ENCODE measurements at regions of chr11 and their contacts with region 1.

Region 1: GRCh38 chr11:9219572-9219971 is 45.6 kb downstream of the DENND5A start:
- DNase-seq: no peak
- ATAC-seq: no peak
- H3K4me3 ChIP-seq: no peak overlapping the region
- H3K27ac ChIP-seq: no peak overlapping the region
- H3K4me1 ChIP-seq: peaks cover 15% of the 10 kb centered on the region
- H3K27me3 ChIP-seq: no peaks in the 10 kb centered on the region
- CTCF ChIP-seq: no peak
- EP300 ChIP-seq: no peak
- POLR2A ChIP-seq: no peak
- RAD21 ChIP-seq: no peak

Region 2: GRCh38 chr11:9039194-9039593 is 180.4 kb before region 1 on chr11:
- CTCF ChIA-PET with region 1: no interaction called
- POLR2A ChIA-PET with region 1: no interaction called
- RAD21 ChIA-PET with region 1: no interaction called
- SMC1A ChIA-PET with region 1: no interaction called
- in situ Hi-C with region 1: no loop called
- intact Hi-C with region 1: no loop called
- DNase-seq: peak; percentile 19
- ATAC-seq: peak; percentile 92
- H3K4me3 ChIP-seq: no peak overlapping the region
- H3K27ac ChIP-seq: no peak overlapping the region
- H3K4me1 ChIP-seq: no peaks in the 10 kb centered on the region
- H3K27me3 ChIP-seq: no peaks in the 10 kb centered on the region; a peak in 1 of 4 replicates
- CTCF ChIP-seq: no peak
- EP300 ChIP-seq: no peak
- POLR2A ChIP-seq: no peak
- RAD21 ChIP-seq: no peak

Region 3: DNA sequence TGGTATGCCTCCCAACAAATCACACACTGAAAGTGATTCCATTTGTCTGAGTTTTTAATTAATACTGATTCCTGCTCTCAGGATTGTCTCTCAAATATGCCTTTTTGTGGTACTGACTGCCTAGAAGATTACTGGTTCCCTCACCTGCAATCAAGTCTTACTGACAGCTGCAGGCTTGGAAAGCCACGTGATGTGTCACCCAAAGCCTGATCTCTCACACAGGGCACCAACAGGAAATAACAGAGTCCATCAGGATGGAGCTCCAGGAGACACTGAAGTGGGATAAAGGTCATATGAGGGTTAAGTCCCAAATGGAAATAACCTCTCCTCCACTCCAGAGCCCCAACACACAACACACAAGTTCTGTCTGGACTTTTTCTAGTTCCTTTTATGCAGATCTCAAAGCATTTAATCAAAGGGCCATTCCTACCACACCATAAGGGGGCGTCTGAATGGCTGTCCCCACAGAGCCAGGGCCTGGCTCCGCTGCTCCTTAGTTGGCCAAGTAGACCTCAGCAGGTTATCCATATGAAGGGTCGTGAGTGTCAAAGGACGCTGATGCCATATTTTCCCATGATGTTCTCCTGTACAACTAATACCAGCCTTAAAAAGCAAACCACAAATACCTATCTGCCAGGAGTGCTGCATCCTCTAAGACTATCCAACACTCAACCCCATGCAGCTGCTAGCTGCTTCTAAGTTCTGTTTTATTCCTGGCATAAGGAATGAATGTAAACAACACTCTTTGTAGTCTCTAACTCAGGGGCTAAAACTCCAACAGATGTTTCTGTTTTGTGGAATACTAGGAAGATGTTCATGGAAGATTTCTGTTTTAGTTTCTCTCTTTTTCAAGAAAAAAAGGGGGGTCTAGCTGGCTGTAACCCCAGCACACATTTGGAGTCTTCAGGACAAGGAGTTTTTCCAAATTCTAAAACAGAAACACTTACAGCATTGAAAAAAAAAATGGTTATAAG is 141.2 kb before region 1 on chr11:
- CTCF ChIA-PET with region 1: no interaction called
- POLR2A ChIA-PET with region 1: no interaction called
- RAD21 ChIA-PET with region 1: no interaction called
- SMC1A ChIA-PET with region 1: no interaction called
- in situ Hi-C with region 1: no loop called
- intact Hi-C with region 1: no loop called
- DNase-seq: no peak
- ATAC-seq: no peak
- H3K4me3 ChIP-seq: no peak overlapping the region
- H3K27ac ChIP-seq: no peak overlapping the region
- H3K4me1 ChIP-seq: no peaks in the 10 kb centered on the region
- H3K27me3 ChIP-seq: no peaks in the 10 kb centered on the region; a peak in 1 of 4 replicates
- CTCF ChIP-seq: no peak
- EP300 ChIP-seq: no peak
- POLR2A ChIP-seq: no peak
- RAD21 ChIP-seq: no peak

Region 4: GRCh38 chr11:9231848-9232177 is 12.2 kb after region 1 on chr11:
- CTCF ChIA-PET with region 1: interaction called, 3 read pairs
- POLR2A ChIA-PET with region 1: no interaction called
- RAD21 ChIA-PET with region 1: interaction called, 5 read pairs
- SMC1A ChIA-PET with region 1: interaction called, 10 read pairs
- in situ Hi-C with region 1: no loop called
- intact Hi-C with region 1: no loop called
- DNase-seq: no peak
- ATAC-seq: peak; percentile 89
- H3K4me3 ChIP-seq: 0 out of 2 replicates have a peak overlapping the region, but pooled peaks have one; percentile 20
- H3K27ac ChIP-seq: peak overlapping the region; percentile 49; the same call in 1 of the 2 replicates
- H3K4me1 ChIP-seq: peaks cover 3% of the 10 kb centered on the region; the same call in 1 of the 2 replicates
- H3K27me3 ChIP-seq: no peaks in the 10 kb centered on the region
- CTCF ChIP-seq: no peak
- EP300 ChIP-seq: no peak
- POLR2A ChIP-seq: no peak
- RAD21 ChIP-seq: no peak

Region 5: DNA sequence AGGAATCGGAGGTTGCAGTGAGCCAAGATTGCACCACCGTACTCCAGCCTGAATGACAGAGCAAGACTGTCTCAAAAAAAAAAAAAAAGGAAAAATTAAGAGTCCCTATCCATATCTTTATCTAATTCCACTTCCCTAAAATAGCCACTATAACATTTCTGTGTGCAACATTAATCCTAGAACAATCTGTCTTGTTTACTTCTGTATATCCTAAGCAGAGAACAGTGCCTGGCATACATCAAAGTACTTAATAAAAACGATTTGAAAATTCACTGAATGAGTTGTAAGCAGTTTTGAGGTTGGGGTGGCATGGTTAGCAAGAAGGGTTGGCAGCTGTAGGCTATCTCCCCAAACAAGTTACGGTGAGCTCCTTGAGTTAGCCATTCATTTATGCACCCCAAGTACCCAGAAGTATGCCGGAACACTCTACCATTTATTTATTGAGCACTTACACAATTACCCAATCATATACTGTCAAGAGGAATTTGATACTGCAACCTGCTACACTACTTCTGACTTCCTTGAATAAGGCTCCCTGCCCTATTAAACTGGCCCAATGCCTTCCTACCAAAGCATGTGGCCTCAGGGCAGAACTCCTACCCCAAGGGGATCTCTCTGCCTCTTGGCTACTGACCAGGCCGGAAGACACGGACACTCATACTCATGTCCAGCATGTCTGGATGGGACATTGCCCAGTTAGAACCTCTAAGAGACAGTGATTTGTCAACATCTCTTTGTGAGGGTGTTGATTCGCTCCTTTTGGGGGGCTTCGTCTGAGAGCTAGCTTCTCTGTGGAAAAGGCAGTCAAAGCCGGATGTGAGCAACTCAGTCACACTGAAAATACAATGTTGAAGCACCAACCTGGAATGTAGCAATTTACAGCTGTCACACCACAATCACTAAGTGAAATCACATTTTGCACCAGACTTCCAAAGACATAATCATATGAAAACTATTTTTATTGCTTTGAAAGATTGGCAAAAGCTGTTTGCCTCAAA is 111.1 kb after region 1 on chr11:
- CTCF ChIA-PET with region 1: no interaction called
- POLR2A ChIA-PET with region 1: no interaction called
- RAD21 ChIA-PET with region 1: no interaction called
- SMC1A ChIA-PET with region 1: no interaction called
- in situ Hi-C with region 1: no loop called
- intact Hi-C with region 1: no loop called
- DNase-seq: no peak
- ATAC-seq: no peak
- H3K4me3 ChIP-seq: no peak overlapping the region
- H3K27ac ChIP-seq: no peak overlapping the region
- H3K4me1 ChIP-seq: no peaks in the 10 kb centered on the region
- H3K27me3 ChIP-seq: no peaks in the 10 kb centered on the region
- CTCF ChIP-seq: no peak
- EP300 ChIP-seq: no peak
- POLR2A ChIP-seq: no peak
- RAD21 ChIP-seq: no peak